ENCODE measurements at regions of chr13 and their contacts with region 1.

Region 1: DNA sequence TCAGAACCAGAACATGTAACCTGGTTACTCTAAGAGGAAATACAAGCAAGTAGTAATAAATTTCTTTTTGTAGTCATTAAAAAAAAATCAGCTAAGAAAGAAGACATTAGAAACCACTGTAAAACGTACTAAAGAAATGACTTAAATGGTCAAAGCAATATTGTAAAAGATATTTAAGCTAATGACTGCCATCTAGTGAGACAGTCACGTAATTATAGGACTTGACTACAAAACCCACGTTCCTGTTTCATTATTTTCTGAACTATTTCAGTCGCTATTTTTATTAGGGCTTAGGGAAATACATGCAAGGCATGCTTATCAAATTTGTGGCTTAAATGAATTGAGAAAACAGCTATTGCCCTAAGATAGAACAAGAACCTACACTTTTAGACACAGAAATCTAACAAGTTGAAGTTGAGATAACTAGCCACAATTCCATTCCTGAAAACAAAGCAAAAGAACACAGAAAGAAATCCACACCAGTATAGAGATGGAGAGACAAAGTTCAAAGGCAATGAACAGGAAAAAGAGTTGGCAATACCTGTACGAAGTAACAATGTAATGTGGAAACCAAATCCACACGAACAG is 17.9 kb downstream of the ALG5 start:
- DNase-seq: no peak
- H3K4me3 ChIP-seq: no peak overlapping the region
- H3K27ac ChIP-seq: peak overlapping the region in 1 of 59 donors; percentile 54
- H3K27me3 ChIP-seq: no peaks in the 10 kb centered on the region
- CTCF ChIP-seq: peak in 55 of 56 donors; percentile 43 to 90 (median 67)

Region 2: GRCh38 chr13:36858290-36858689 is 123.0 kb before region 1 on chr13:
- intact Hi-C with region 1: loop called (anchors 2 to 5 kb)
- DNase-seq: no peak
- H3K4me3 ChIP-seq: no peak overlapping the region
- H3K27ac ChIP-seq: no peak overlapping the region
- H3K27me3 ChIP-seq: no peaks in the 10 kb centered on the region
- CTCF ChIP-seq: peak in 54 of 56 donors; percentile 25 to 72 (median 56)

Measured in dorsolateral prefrontal cortex (tissue), 120 donors.